Activated CD4-positive, alpha-beta T cell treated with anti-CD3 and anti-CD28 coated beads, Interleukin-2, amount 10 ng/mL, durations not matched to agents 24 days and 14 days (primary cell): ENCODE measurements at regions of chr1 and their contacts with region 1.

Region 1: GRCh38 chr1:212141404-212141803 is 105.9 kb downstream of the DTL start:
- DNase-seq: no peak
- H3K4me3 Mint-ChIP-seq: no peak overlapping the region
- H3K27ac Mint-ChIP-seq: no peak overlapping the region
- H3K4me1 Mint-ChIP-seq: no peaks in the 10 kb centered on the region
- H3K27me3 Mint-ChIP-seq: no peaks in the 10 kb centered on the region

Region 2: GRCh38 chr1:212104586-212105325 is 36.6 kb before region 1 on chr1:
- intact Hi-C with region 1: loop called (anchors 5 kb)
- DNase-seq: no peak
- H3K4me3 Mint-ChIP-seq: no peak overlapping the region
- H3K27ac Mint-ChIP-seq: no peak overlapping the region
- H3K4me1 Mint-ChIP-seq: peaks cover 21% of the 10 kb centered on the region
- H3K27me3 Mint-ChIP-seq: no peaks in the 10 kb centered on the region

Region 3: DNA sequence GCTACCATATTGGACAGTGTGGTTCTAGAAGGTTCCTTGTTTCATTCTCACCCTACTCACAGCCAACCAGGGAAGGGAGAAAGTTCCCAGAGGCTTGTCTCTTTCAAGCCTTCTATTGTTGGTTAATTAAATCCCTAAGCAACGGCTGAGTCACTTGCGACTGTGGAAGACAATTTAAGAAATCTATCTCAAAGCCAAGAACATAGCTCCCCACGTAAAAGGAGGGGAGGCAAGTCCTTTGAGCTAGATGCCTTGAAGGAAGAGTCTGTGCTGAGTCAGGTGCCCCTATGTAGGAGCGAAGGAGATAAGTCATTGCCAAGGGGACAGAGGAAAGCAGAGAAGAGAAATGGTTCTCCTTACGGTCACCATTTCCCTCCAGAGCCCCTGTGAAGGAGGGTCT is 64.4 kb after region 1 on chr1:
- intact Hi-C with region 1: no loop called
- DNase-seq: no peak
- H3K4me3 Mint-ChIP-seq: no peak overlapping the region
- H3K27ac Mint-ChIP-seq: no peak overlapping the region
- H3K4me1 Mint-ChIP-seq: no peaks in the 10 kb centered on the region
- H3K27me3 Mint-ChIP-seq: peaks cover 2% of the 10 kb centered on the region